Ovary (tissue), 10 donors: ENCODE measurements at regions of chr5 and their contacts with region 1.

Region 1: DNA sequence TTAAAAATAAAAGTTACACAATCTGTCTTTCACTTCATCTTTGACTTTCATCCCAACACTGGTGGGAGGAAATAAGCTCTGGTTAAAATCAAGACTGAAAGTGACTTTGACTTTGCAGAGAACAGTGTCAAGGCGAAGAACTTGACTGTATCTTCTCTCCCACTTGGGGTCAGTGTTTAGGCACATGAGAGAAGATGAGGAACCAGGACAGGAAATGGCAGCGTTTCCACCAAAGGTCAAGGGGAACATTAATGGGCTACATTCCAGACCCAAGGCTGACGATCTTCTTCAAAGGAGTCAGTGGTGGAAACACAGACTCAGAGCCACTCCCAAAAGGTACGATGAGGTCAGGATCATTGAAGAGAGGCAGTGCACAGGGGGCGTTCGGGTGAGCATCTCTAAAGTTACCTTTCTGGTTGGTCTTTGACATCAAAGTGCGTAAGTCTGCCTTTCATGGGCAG is 409.6 kb downstream of the ARHGEF28 start:
- DNase-seq: peak; percentile 62 to 63 (median 63)
- H3K4me3 ChIP-seq: no peak overlapping the region
- H3K27ac ChIP-seq: no peak overlapping the region
- H3K4me1 ChIP-seq: peaks cover 6% of the 10 kb centered on the region
- H3K27me3 ChIP-seq: no peaks in the 10 kb centered on the region
- CTCF ChIP-seq: peak; percentile 34 to 51 (median 45)
- EP300 ChIP-seq: no peak
- POLR2A ChIP-seq: no peak

Region 2: GRCh38 chr5:73663860-73664240 is 371.7 kb before region 1 on chr5:
- intact Hi-C with region 1: no loop called
- DNase-seq: no peak
- H3K4me3 ChIP-seq: no peak overlapping the region
- H3K27ac ChIP-seq: no peak overlapping the region
- H3K4me1 ChIP-seq: peaks cover 6% of the 10 kb centered on the region
- H3K27me3 ChIP-seq: no peaks in the 10 kb centered on the region
- CTCF ChIP-seq: no peak
- EP300 ChIP-seq: no peak
- POLR2A ChIP-seq: no peak

Region 3: GRCh38 chr5:73902327-73903051 is 133.1 kb before region 1 on chr5:
- intact Hi-C with region 1: loop called in 2 of 4 experiments (anchors 10 kb)
- DNase-seq: peak in 1 of 5 donors; percentile 39
- H3K4me3 ChIP-seq: no peak overlapping the region
- H3K27ac ChIP-seq: no peak overlapping the region
- H3K4me1 ChIP-seq: no peaks in the 10 kb centered on the region
- H3K27me3 ChIP-seq: no peaks in the 10 kb centered on the region
- CTCF ChIP-seq: peak; percentile 70 to 93 (median 92)
- EP300 ChIP-seq: no peak
- POLR2A ChIP-seq: no peak

Region 4: DNA sequence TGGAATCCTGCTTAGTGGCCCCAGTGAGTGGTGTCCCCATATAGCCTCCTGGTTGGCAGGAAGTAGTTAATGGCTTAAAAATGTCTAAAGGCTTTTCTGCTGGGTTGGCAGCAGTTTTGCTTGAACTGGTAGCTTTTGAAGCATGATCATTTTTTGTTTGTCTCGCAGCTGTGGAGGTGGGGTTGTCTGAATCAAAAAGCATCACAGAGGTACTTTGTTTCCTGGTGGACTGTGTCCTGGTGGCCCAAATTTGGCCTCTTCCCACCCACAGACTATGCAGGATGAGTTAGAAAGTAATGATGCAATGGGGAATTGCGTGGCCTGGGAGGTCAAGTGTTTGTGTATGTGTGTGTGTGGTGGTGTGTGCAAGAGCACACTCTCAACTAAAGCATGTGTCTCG is 86.8 kb before region 1 on chr5:
- intact Hi-C with region 1: no loop called
- DNase-seq: peak in 4 of 5 donors; percentile 31 to 62 (median 50)
- H3K4me3 ChIP-seq: no peak overlapping the region
- H3K27ac ChIP-seq: no peak overlapping the region
- H3K4me1 ChIP-seq: peaks cover 12% of the 10 kb centered on the region
- H3K27me3 ChIP-seq: no peaks in the 10 kb centered on the region
- CTCF ChIP-seq: no peak
- EP300 ChIP-seq: no peak
- POLR2A ChIP-seq: no peak

Region 5: DNA sequence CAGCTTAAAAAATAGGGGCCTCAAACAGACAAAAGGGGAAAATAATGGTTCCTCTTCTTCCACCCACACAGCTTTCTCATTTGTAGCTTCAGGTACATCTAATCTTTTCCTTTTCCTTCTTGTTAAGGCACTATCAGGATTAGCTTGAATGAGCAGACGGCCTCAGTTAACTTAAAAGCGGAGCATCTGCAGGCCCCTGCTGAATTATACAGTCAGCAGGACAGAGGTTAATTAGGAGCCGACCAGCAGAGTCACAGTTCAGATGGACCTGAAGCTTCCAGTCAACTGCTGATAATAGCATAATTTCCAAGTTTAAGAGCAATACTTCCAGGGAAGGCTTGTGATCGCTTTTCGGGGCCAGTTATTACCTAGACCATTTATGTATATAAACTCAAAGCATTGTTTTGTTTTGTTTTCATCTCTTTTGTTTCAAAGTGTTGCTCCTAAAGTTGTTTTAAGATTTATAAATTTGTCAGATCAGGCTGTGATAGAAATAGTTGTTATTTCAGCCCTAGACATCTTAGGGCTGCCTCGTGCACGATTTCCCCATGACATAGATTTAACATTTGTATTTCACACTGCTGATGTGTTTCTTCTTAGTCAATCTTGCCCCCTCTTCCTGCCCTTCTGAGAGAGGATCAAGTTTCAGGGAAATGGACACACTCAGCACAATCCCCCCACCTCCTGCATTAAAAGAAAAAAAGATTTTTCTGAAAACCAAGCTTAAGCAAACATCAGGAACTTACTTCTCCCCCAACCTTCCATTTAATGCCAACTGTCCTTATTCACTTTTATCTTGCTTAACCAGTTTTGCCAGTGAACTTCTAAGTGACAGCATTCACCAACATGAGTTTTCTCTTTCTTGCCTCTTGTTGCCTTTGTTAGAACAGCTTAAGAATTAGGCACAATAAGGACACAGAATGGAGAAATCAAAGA is 40.2 kb after region 1 on chr5:
- intact Hi-C with region 1: no loop called
- DNase-seq: no peak
- H3K4me3 ChIP-seq: no peak overlapping the region
- H3K27ac ChIP-seq: no peak overlapping the region
- H3K4me1 ChIP-seq: no peaks in the 10 kb centered on the region
- H3K27me3 ChIP-seq: no peaks in the 10 kb centered on the region
- CTCF ChIP-seq: no peak
- EP300 ChIP-seq: no peak
- POLR2A ChIP-seq: no peak

Region 6: DNA sequence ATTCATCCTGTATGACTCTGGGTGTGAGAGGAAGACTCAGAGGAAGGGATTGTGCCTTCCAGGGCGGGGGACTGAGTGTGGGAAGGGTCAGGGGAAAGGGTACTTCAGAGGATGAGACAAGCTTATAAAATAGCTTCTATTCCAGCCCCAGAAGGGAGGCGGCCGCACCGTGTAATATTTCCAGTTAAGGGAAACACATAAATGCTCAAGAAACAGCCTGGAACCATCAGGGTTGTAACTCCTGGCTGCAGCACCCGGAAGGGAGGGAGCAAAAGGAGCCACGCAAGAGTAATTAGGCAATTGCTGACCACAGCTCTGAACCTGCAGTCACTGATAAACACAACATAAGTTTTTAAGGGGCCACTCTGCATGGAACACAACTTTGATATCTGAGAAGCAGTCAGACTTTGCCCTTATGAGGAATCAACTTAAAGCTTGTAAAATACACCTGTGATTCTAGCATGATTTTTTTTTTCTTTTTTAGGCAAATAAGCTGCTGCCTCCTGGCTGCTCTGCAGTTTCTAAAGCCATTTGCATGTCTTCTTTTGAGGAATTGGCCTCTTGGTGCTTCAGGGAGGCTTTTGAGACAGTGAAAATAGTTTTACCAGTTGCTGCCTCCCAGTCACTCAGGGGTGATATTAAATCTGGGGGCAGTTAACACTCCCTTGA is 222.2 kb after region 1 on chr5:
- intact Hi-C with region 1: loop called in 1 of 4 experiments (anchors 5 kb)
- DNase-seq: peak; percentile 72 to 87 (median 76)
- H3K4me3 ChIP-seq: no peak overlapping the region
- H3K27ac ChIP-seq: peak overlapping the region; percentile 47 to 51
- H3K4me1 ChIP-seq: peaks cover 7% of the 10 kb centered on the region
- H3K27me3 ChIP-seq: no peaks in the 10 kb centered on the region
- CTCF ChIP-seq: no peak
- EP300 ChIP-seq: no peak
- POLR2A ChIP-seq: no peak

Region 7: GRCh38 chr5:74288448-74289108 is 253.0 kb after region 1 on chr5:
- intact Hi-C with region 1: loop called in 1 of 4 experiments (anchors 10 kb)
- DNase-seq: peak in 2 of 5 donors; percentile 34 to 45
- H3K4me3 ChIP-seq: no peak overlapping the region
- H3K27ac ChIP-seq: no peak overlapping the region
- H3K4me1 ChIP-seq: peaks cover 15% of the 10 kb centered on the region
- H3K27me3 ChIP-seq: no peaks in the 10 kb centered on the region
- CTCF ChIP-seq: no peak
- EP300 ChIP-seq: peak; percentile 44
- POLR2A ChIP-seq: no peak

Region 8: DNA sequence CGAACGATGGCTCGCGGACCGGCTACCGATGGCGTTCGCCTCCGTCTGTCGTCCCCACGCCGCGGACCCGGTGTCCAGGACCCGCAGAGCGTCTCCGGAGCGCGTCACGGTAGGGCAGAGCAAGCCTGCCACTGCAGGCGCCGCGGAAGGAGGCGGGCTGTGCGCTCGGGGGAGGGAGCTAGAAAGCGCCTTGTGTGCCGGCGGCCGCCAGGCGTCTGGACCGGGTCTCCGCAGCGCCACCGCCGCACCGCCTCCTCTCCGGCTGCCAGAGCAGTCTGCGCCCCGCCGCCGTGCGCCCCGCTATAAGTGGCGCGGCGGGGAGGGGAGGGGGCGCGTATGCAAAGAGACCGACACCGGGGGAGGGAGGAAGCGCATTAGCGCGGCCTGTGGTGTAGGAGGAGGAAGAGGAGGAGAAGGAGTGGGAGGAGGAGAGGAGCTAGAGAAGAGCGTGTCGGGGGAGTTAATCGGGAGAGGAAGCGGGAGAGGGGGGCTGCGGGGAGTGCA is 605.0 kb after region 1 on chr5 and contains the start of gene ENC1:
- intact Hi-C with region 1: loop called (anchors 5 to 10 kb)
- DNase-seq: peak; percentile 73 to 86 (median 83)
- H3K4me3 ChIP-seq: peak within 1 kb of the TSS; percentile 73
- H3K27ac ChIP-seq: peak within 1 kb of the TSS; percentile 56 to 60
- H3K4me1 ChIP-seq: peaks cover 6% of the 10 kb centered on the region
- H3K27me3 ChIP-seq: no peaks in the 10 kb centered on the region
- CTCF ChIP-seq: peak; percentile 38 to 85 (median 84)
- EP300 ChIP-seq: no peak
- POLR2A ChIP-seq: peak; percentile 26
- total RNA-seq, gene ENC1: 13.2 to 54.7 (median 23.4) TPM

Region 9: GRCh38 chr5:74889523-74890105 is 854.1 kb after region 1 on chr5:
- intact Hi-C with region 1: no loop called
- DNase-seq: no peak
- H3K4me3 ChIP-seq: no peak overlapping the region
- H3K27ac ChIP-seq: no peak overlapping the region
- H3K4me1 ChIP-seq: no peaks in the 10 kb centered on the region
- H3K27me3 ChIP-seq: no peaks in the 10 kb centered on the region
- CTCF ChIP-seq: no peak
- EP300 ChIP-seq: no peak
- POLR2A ChIP-seq: no peak